AG04450 (cell line): ENCODE measurements at regions of chr13 and their contacts with region 1.

Region 1: DNA sequence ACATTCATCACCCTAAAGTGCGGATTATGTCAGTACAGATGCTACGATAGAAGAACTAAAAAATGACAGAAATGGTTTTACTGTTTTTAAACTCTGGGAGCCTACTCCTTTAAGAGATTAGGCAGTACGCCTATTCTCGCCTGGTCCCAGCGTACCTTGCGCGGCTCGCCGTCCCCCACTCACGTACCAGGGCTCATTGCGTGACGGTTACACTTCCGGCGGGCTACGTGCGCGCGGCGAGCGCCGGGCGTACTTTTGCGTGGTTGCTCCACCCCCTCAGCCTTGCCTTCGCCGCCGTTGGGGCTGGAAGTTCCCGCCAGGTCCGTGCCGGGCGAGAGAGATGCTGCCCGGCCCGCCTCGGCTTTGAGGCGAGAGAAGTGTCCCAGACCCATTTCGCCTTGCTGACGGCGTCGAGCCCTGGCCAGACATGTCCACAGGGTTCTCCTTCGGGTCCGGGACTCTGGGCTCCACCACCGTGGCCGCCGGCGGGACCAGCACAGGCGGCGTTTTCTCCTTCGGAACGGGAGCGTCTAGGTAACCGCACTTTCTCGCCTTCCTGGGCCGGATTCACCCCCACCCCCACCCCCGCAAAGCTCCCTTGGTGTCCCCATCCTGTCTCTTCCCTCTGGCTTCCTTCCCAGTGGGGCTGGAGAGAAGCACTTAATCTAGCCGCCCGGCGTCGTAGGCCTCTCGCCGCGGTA is at the start of gene NUP58:
- DNase-seq: peak; percentile 87
- H3K4me3 ChIP-seq: peak within 1 kb of the TSS; percentile 87
- H3K27ac ChIP-seq: peak within 1 kb of the TSS; percentile 95
- H3K27me3 ChIP-seq: no peaks in the 10 kb centered on the region
- CTCF ChIP-seq: no peak
- polyA plus RNA-seq, gene NUP58: 33.1 and 46.2 TPM in 2 replicates

Region 2: GRCh38 chr13:25267715-25268114 is 33.8 kb before region 1 on chr13:
- CTCF ChIA-PET with region 1: no interaction called
- POLR2A ChIA-PET with region 1: interaction called, 12 read pairs
- DNase-seq: no peak
- H3K4me3 ChIP-seq: no peak overlapping the region
- H3K27ac ChIP-seq: no peak overlapping the region
- H3K27me3 ChIP-seq: no peaks in the 10 kb centered on the region
- CTCF ChIP-seq: peak; percentile 31; the same call in 1 of the 2 replicates

Region 3: GRCh38 chr13:25420161-25420560 is 118.7 kb after region 1 on chr13:
- CTCF ChIA-PET with region 1: no interaction called
- POLR2A ChIA-PET with region 1: no interaction called
- DNase-seq: no peak
- H3K4me3 ChIP-seq: no peak overlapping the region
- H3K27ac ChIP-seq: no peak overlapping the region
- H3K27me3 ChIP-seq: no peaks in the 10 kb centered on the region
- CTCF ChIP-seq: no peak